ENCODE measurements at regions of chr11 and their contacts with region 1.

Region 1: GRCh38 chr11:131549770-131550169 is 179.4 kb downstream of the NTM start:
- DNase-seq: no peak
- ATAC-seq: no peak
- H3K4me3 ChIP-seq: no peak overlapping the region
- H3K27ac ChIP-seq: no peak overlapping the region
- H3K4me1 ChIP-seq: no peaks in the 10 kb centered on the region
- H3K27me3 ChIP-seq: peaks cover 43% of the 10 kb centered on the region
- CTCF ChIP-seq: no peak

Region 2: DNA sequence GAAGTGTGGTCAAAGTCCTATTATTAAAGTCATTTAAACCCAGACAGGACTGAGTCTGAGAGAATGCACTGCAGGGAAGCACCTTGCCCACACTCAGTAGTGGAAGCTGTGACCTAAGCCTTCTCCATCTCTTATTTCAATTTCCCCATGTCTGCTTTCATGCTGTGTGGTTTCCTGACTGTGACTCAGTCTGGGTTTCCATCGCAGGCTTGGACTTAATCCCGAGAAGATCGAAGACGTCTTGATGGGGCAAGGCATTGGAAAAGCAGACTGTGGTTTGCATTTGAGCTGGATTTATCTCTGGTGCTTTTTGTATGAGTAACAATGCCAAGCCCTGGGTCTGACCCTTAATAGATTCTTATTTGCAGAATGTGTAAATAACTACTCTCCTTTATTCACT is 59.6 kb after region 1 on chr11:
- CTCF ChIA-PET with region 1: no interaction called
- POLR2A ChIA-PET with region 1: interaction called, 16 read pairs
- intact Hi-C with region 1: no loop called
- DNase-seq: no peak
- ATAC-seq: no peak
- H3K4me3 ChIP-seq: no peak overlapping the region
- H3K27ac ChIP-seq: no peak overlapping the region
- H3K4me1 ChIP-seq: no peaks in the 10 kb centered on the region
- H3K27me3 ChIP-seq: peaks cover 59% of the 10 kb centered on the region
- CTCF ChIP-seq: no peak

Measured in PC-3 (cell line).